Caco-2 (cell line): ENCODE measurements at regions of chr2 and their contacts with region 1.

Region 1: GRCh38 chr2:155310589-155310988 is 612.1 kb downstream of the KCNJ3 start:
- DNase-seq: no peak
- H3K4me3 ChIP-seq: no peak overlapping the region
- H3K4me3 Mint-ChIP-seq: no peak overlapping the region
- H3K27ac Mint-ChIP-seq: no peak overlapping the region
- H3K4me1 ChIP-seq: no peaks in the 10 kb centered on the region
- H3K4me1 Mint-ChIP-seq: no peaks in the 10 kb centered on the region
- H3K27me3 ChIP-seq: no peaks in the 10 kb centered on the region
- H3K27me3 Mint-ChIP-seq: no peaks in the 10 kb centered on the region
- CTCF ChIP-seq: peak; percentile 44 to 66

Region 2: DNA sequence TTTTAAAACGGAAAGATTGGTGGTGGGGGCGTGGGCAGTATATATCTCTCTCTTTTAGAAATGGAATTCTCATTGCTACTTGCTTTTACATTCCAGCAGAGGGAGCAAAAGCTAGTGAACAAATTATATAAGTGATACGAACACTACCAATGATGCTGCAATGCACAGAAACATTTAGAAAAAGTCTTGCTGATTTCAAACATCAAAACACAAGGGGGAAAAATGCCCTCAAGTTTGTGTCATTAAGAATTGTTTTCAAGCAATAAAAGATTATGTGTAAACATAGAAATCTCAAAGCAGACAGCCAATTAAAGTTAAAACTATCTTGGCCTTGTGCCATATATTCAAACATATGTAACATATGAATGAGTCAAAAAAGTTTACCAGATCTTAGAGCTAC is 908.4 kb before region 1 on chr2:
- CTCF ChIA-PET with region 1: interaction called, 3 read pairs
- POLR2A ChIA-PET with region 1: no interaction called
- intact Hi-C with region 1: loop called (anchors 1 kb)
- DNase-seq: peak in 1 of 2 experiments; percentile 3
- H3K4me3 ChIP-seq: no peak overlapping the region
- H3K4me3 Mint-ChIP-seq: no peak overlapping the region
- H3K27ac Mint-ChIP-seq: no peak overlapping the region
- H3K4me1 ChIP-seq: no peaks in the 10 kb centered on the region
- H3K4me1 Mint-ChIP-seq: peaks cover 6% of the 10 kb centered on the region
- H3K27me3 ChIP-seq: no peaks in the 10 kb centered on the region
- H3K27me3 Mint-ChIP-seq: peaks cover 5% of the 10 kb centered on the region
- CTCF ChIP-seq: peak in 1 of 2 experiments; percentile 60

Region 3: GRCh38 chr2:154452906-154453493 is 857.6 kb before region 1 on chr2:
- CTCF ChIA-PET with region 1: interaction called, 4 read pairs
- POLR2A ChIA-PET with region 1: no interaction called
- intact Hi-C with region 1: loop called (anchors 5 kb)
- DNase-seq: no peak
- H3K4me3 ChIP-seq: no peak overlapping the region
- H3K4me3 Mint-ChIP-seq: no peak overlapping the region
- H3K27ac Mint-ChIP-seq: no peak overlapping the region
- H3K4me1 ChIP-seq: peaks cover 29% of the 10 kb centered on the region
- H3K4me1 Mint-ChIP-seq: peaks cover 15% of the 10 kb centered on the region
- H3K27me3 ChIP-seq: no peaks in the 10 kb centered on the region
- H3K27me3 Mint-ChIP-seq: no peaks in the 10 kb centered on the region
- CTCF ChIP-seq: peak; percentile 7 to 16

Region 4: GRCh38 chr2:155256803-155257202 is 53.8 kb before region 1 on chr2:
- CTCF ChIA-PET with region 1: no interaction called
- POLR2A ChIA-PET with region 1: no interaction called
- intact Hi-C with region 1: loop called (anchors 1 kb)
- DNase-seq: peak; percentile 58 to 67
- H3K4me3 ChIP-seq: no peak overlapping the region
- H3K4me3 Mint-ChIP-seq: no peak overlapping the region
- H3K27ac Mint-ChIP-seq: no peak overlapping the region
- H3K4me1 ChIP-seq: no peaks in the 10 kb centered on the region
- H3K4me1 Mint-ChIP-seq: no peaks in the 10 kb centered on the region
- H3K27me3 ChIP-seq: no peaks in the 10 kb centered on the region
- H3K27me3 Mint-ChIP-seq: no peaks in the 10 kb centered on the region
- CTCF ChIP-seq: peak; percentile 29 to 44